Gastrocnemius medialis (tissue), 4 donors: ENCODE measurements at regions of chr16 and their contacts with region 1.

Region 1: DNA sequence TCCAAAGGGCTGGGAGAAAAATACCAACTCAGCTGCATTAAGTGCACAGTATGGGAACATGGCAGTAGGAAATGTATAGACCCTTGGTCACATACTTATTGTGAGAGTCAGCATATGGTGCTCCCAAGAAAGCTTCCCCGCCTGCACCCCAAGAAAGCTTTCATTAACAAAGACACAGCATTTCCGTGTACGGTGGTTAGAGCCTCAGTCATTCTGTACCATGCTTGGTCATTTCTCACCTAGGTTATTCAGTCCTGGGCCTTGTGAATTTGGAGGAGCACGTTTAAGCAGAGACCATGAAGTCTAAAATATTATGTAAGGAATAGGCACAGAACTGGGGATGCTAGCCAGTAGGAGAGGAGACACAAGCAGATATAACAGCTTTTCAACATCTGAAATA is 56.1 kb downstream of the ESRP2 start:
- DNase-seq: no peak
- ATAC-seq: no peak
- H3K4me3 ChIP-seq: no peak overlapping the region
- H3K27ac ChIP-seq: peak overlapping the region; percentile 20 to 60 (median 45)
- H3K4me1 ChIP-seq: peaks cover 20 to 30% of the 10 kb centered on the region in 2 donors
- H3K27me3 ChIP-seq: no peaks in the 10 kb centered on the region
- CTCF ChIP-seq: no peak
- POLR2A ChIP-seq: no peak

Region 2: GRCh38 chr16:68144008-68144407 is 35.8 kb before region 1 on chr16:
- in situ Hi-C with region 1: no loop called
- intact Hi-C with region 1: loop called (anchors 5 kb)
- DNase-seq: no peak
- ATAC-seq: no peak
- H3K4me3 ChIP-seq: no peak overlapping the region
- H3K27ac ChIP-seq: no peak overlapping the region
- H3K4me1 ChIP-seq: peaks cover 41 to 48% of the 10 kb centered on the region in 2 donors
- H3K27me3 ChIP-seq: no peaks in the 10 kb centered on the region
- CTCF ChIP-seq: no peak
- POLR2A ChIP-seq: no peak